A673 (cell line): ENCODE measurements at regions of chr4 and their contacts with region 1.

Region 1: GRCh38 chr4:74133786-74134499 is 24.0 kb upstream of the MTHFD2L start:
- DNase-seq: peak; percentile 73
- H3K4me3 ChIP-seq: no peak overlapping the region
- H3K27ac ChIP-seq: no peak overlapping the region
- H3K4me1 ChIP-seq: no peaks in the 10 kb centered on the region
- H3K27me3 ChIP-seq: no peaks in the 10 kb centered on the region
- CTCF ChIP-seq: peak; percentile 68

Region 2: GRCh38 chr4:73573794-73574406 is 560.0 kb before region 1 on chr4:
- CTCF ChIA-PET with region 1: no interaction called
- POLR2A ChIA-PET with region 1: no interaction called
- intact Hi-C with region 1: loop called (anchors 5 kb)
- DNase-seq: peak; percentile 73
- H3K4me3 ChIP-seq: no peak overlapping the region
- H3K27ac ChIP-seq: no peak overlapping the region
- H3K4me1 ChIP-seq: no peaks in the 10 kb centered on the region
- H3K27me3 ChIP-seq: no peaks in the 10 kb centered on the region
- CTCF ChIP-seq: peak; percentile 68

Region 3: GRCh38 chr4:73944061-73944875 is 189.7 kb before region 1 on chr4:
- CTCF ChIA-PET with region 1: no interaction called
- POLR2A ChIA-PET with region 1: no interaction called
- intact Hi-C with region 1: loop called (anchors 10 kb)
- DNase-seq: no peak
- H3K4me3 ChIP-seq: peak overlapping the region; percentile 31
- H3K27ac ChIP-seq: no peak overlapping the region
- H3K4me1 ChIP-seq: no peaks in the 10 kb centered on the region
- H3K27me3 ChIP-seq: peaks cover 11% of the 10 kb centered on the region
- CTCF ChIP-seq: no peak